T-cell (primary cell): ENCODE measurements at regions of chrX and their contacts with region 1.

Region 1: DNA sequence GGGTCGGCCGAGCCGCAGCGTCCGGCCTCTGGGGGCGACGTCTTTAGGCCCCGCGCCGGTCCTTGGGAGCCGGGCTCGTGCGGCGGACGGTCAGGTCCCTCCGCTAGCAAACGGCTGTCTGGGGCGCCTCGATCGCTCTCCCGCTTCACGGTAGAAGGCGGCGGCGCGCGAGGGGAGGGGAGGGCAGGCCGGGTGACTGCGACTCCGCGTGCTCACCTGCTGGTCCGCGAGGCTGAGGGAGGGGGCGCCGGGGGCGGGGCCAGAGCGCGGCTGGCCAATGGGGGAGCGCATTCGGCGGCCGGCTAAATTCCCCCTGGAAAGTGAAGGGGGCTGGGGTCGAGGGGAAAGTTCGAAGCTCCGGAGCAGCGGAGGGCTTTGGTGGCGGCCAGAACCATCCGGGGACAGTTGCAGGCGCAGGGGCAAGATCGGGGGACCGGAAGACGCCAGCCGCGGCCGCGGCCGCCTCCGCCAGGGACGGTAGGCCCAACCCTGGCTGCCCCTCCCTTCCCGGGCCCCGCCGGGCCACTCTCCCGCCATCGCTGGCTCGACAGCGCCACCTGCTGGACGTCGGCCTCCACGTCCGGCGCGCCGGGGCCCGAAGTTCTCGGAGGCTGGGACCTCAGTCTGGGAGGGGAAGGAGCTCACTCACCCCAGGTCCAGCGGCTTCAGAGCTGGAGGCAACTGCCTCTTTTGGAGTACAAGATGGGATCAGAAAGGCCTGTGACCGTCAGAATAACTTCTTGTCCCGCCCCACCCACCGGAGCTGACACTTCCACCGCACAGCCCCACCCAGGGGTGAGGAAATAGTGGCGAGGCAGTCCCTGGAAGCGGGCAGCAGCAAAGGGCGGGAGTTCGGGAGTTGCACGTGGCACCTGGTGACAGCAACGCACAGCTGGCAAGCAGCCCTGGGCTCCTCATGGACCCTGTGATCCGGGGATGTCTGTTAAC is 49.9 kb downstream of the ELF4 start:
- DNase-seq: peak; percentile 23 to 85 (median 70)
- ATAC-seq: peak; percentile 86 to 90 (median 88)
- H3K4me3 ChIP-seq: peak overlapping the region; percentile 48 to 52
- H3K4me3 Mint-ChIP-seq: peak overlapping the region; percentile 54 to 76 (median 75)
- H3K27ac ChIP-seq: no peak overlapping the region
- H3K27ac Mint-ChIP-seq: no peak overlapping the region
- H3K4me1 ChIP-seq: peaks cover 0 to 14% of the 10 kb centered on the region in 2 experiments
- H3K4me1 Mint-ChIP-seq: peaks cover 0 to 6% (median 5%) of the 10 kb centered on the region in 3 donors
- H3K27me3 ChIP-seq: no peaks in the 10 kb centered on the region
- H3K27me3 Mint-ChIP-seq: peaks cover 0 to 8% of the 10 kb centered on the region in 2 donors

Region 2: DNA sequence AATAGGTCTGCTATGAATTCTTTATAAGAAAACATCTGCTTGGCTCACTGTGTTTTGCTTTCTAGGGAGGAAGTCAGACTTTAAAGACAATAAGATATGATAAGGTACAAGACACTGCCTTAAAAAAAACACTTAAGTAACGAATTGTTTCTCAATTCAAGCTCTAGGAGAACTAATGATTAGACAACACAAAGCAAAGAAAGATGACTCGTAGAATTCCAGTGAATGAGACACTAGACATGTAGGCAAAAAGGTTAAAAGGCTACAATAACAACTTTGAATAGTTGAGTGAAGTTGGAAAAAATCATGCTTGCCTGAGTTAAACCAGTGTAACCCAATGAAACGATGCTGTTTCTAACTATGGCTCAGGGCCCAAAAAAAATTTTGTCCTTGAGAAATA is 1663.8 kb before region 1 on chrX:
- CTCF ChIA-PET with region 1: no interaction called
- POLR2A ChIA-PET with region 1: no interaction called
- DNase-seq: no peak
- ATAC-seq: no peak
- H3K4me3 ChIP-seq: no peak overlapping the region
- H3K4me3 Mint-ChIP-seq: no peak overlapping the region
- H3K27ac ChIP-seq: no peak overlapping the region
- H3K27ac Mint-ChIP-seq: no peak overlapping the region
- H3K4me1 ChIP-seq: no peaks in the 10 kb centered on the region
- H3K4me1 Mint-ChIP-seq: no peaks in the 10 kb centered on the region
- H3K27me3 ChIP-seq: no peaks in the 10 kb centered on the region
- H3K27me3 Mint-ChIP-seq: no peaks in the 10 kb centered on the region

Region 3: DNA sequence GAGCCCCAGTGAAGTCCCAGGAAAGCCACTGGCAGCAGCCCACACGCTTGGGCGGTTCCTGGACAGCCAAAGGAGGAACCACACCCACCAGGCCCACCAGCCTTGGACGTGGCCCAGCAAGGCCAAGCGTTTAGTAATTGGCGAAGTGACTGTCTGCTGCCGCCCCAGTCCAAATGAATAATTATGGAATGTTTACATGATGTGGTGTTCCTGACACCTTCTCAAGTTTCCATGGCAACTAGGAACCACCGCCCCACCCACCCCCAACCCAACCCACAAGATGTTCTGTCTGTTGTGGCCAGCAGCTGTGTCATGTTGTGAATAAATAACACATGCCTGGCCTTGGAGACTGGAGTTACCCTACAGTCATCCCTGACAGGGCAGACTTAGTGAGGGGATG is 428.0 kb before region 1 on chrX:
- CTCF ChIA-PET with region 1: interaction called in 1 of 2 experiments, 10 read pairs
- POLR2A ChIA-PET with region 1: no interaction called
- DNase-seq: no peak
- ATAC-seq: no peak
- H3K4me3 ChIP-seq: no peak overlapping the region
- H3K4me3 Mint-ChIP-seq: no peak overlapping the region
- H3K27ac ChIP-seq: no peak overlapping the region
- H3K27ac Mint-ChIP-seq: no peak overlapping the region
- H3K4me1 ChIP-seq: peaks cover 0 to 2% of the 10 kb centered on the region in 2 experiments
- H3K4me1 Mint-ChIP-seq: peaks cover under 1 to 3% (median 1%) of the 10 kb centered on the region in 3 donors
- H3K27me3 ChIP-seq: no peaks in the 10 kb centered on the region
- H3K27me3 Mint-ChIP-seq: peaks cover 0 to 3% of the 10 kb centered on the region in 2 donors

Region 4: GRCh38 chrX:129925305-129926092 is 134.9 kb before region 1 on chrX:
- CTCF ChIA-PET with region 1: interaction called, 8 to 23 read pairs
- POLR2A ChIA-PET with region 1: no interaction called
- DNase-seq: peak; percentile 39 to 82 (median 59)
- ATAC-seq: peak; percentile 57 to 83 (median 72)
- H3K4me3 ChIP-seq: no peak overlapping the region
- H3K4me3 Mint-ChIP-seq: no peak overlapping the region
- H3K27ac ChIP-seq: no peak overlapping the region
- H3K27ac Mint-ChIP-seq: no peak overlapping the region
- H3K4me1 ChIP-seq: peaks cover 0 to 3% of the 10 kb centered on the region in 2 experiments
- H3K4me1 Mint-ChIP-seq: peaks cover 3 to 4% (median 3%) of the 10 kb centered on the region in 3 donors
- H3K27me3 ChIP-seq: no peaks in the 10 kb centered on the region
- H3K27me3 Mint-ChIP-seq: peaks cover 0 to 6% of the 10 kb centered on the region in 2 donors

Region 5: GRCh38 chrX:129984141-129984837 is 76.1 kb before region 1 on chrX:
- CTCF ChIA-PET with region 1: interaction called in 1 of 2 experiments, 10 read pairs
- POLR2A ChIA-PET with region 1: no interaction called
- DNase-seq: peak in 14 of 35 experiments; percentile 7 to 63 (median 26)
- ATAC-seq: peak; percentile 9 to 14 (median 12)
- H3K4me3 ChIP-seq: peak overlapping the region; percentile 47 to 55
- H3K4me3 Mint-ChIP-seq: peak overlapping the region in 2 of 3 donors; percentile 76 to 79
- H3K27ac ChIP-seq: no peak overlapping the region
- H3K27ac Mint-ChIP-seq: peak overlapping the region in 1 of 2 donors; percentile 68
- H3K4me1 ChIP-seq: peaks cover 8 to 21% of the 10 kb centered on the region in 2 experiments
- H3K4me1 Mint-ChIP-seq: peaks cover 13 to 27% (median 20%) of the 10 kb centered on the region in 3 donors
- H3K27me3 ChIP-seq: no peaks in the 10 kb centered on the region
- H3K27me3 Mint-ChIP-seq: no peaks in the 10 kb centered on the region

Region 6: GRCh38 chrX:130260316-130260715 is 199.9 kb after region 1 on chrX:
- CTCF ChIA-PET with region 1: no interaction called
- POLR2A ChIA-PET with region 1: interaction called in 1 of 2 experiments, 14 read pairs
- DNase-seq: no peak
- ATAC-seq: no peak
- H3K4me3 ChIP-seq: no peak overlapping the region
- H3K4me3 Mint-ChIP-seq: no peak overlapping the region
- H3K27ac ChIP-seq: no peak overlapping the region
- H3K27ac Mint-ChIP-seq: no peak overlapping the region
- H3K4me1 ChIP-seq: no peaks in the 10 kb centered on the region
- H3K4me1 Mint-ChIP-seq: peaks cover 0 to under 1% (median 0%) of the 10 kb centered on the region in 3 donors
- H3K27me3 ChIP-seq: no peaks in the 10 kb centered on the region
- H3K27me3 Mint-ChIP-seq: no peaks in the 10 kb centered on the region

Region 7: DNA sequence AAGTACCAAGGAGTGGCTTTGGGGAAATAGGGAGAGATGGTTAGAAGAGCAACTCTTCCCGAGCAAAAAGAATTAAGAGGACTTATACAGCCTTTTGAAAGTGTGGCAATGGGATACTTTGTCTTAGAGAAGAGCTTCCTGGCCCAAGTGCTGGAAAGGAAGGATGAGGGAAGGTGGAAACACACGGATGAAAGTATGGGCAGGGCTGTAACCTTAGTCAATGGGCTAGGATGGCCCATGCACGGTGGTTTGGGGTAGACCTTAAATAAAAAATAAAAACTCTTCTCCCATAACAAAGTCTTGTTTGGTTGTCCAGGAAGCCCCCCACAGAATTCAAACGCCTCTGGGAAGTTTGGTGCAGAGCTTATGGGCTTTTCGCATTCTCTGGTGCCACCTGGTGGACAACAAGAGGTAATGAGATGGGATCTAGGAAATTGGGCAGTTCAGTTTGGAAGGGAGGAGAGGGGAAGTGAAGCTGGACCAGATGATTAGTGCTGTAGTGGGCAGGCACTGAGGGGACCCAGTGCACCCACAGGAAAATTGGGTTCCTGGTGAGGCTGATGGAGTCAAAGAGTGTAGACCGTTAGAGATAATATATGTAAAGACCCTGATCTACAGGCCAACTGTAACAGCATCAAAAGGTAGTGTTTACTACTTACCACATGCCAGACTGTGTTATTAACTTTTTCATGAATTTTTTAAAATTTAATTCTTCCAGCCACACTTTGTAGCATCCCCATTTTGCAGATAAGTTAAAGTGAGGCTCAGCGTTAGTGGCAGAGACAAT is 856.4 kb after region 1 on chrX:
- CTCF ChIA-PET with region 1: interaction called in 1 of 2 experiments, 10 read pairs
- POLR2A ChIA-PET with region 1: no interaction called
- DNase-seq: peak in 30 of 35 experiments; percentile 2 to 75 (median 19)
- ATAC-seq: peak in 2 of 4 experiments; percentile 48 to 59
- H3K4me3 ChIP-seq: no peak overlapping the region
- H3K4me3 Mint-ChIP-seq: no peak overlapping the region
- H3K27ac ChIP-seq: no peak overlapping the region
- H3K27ac Mint-ChIP-seq: no peak overlapping the region
- H3K4me1 ChIP-seq: no peaks in the 10 kb centered on the region
- H3K4me1 Mint-ChIP-seq: no peaks in the 10 kb centered on the region
- H3K27me3 ChIP-seq: peaks cover 0 to 3% of the 10 kb centered on the region in 2 experiments
- H3K27me3 Mint-ChIP-seq: peaks cover 4 to 24% of the 10 kb centered on the region in 2 donors